ENCODE measurements at regions of chr1 and their contacts with region 1.

Region 1: DNA sequence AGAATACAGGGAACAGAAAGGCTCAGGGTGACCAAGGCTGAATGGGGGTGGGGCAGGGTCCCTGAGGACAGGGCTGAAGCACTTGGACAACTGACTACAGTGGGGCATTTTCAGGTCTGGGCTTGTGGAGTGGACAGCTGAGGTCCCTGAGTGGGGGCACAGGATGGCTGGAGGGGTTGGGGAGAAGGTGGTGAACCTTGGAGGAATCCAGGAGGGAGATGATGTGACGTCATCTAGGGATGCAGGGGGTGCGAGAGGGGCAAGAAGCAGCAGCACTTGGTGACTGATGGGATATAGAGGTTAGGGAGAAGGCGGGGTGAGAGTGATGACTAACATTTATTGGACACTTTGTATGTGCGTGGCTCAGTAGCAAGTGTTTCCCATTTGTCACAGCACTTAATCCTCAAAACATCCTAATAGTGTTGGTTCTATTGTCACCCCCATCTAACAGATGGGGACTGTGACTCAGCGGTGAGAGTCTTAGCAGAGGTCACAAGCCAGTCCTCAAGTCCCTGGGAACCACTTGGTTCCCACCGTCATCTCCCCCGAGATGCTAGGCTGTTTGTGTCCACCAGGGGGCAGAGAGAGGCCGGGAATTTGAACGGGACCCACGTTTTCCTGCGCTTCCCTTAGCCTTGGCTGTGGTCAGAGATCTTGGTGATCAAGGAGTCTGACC is 27.9 kb upstream of the BMP8B start:
- DNase-seq: peak; percentile 81
- ATAC-seq: peak; percentile 76
- H3K4me3 Mint-ChIP-seq: peak overlapping the region; percentile 9
- H3K27ac Mint-ChIP-seq: peak overlapping the region; percentile 49
- H3K4me1 Mint-ChIP-seq: peaks cover 13% of the 10 kb centered on the region
- H3K27me3 Mint-ChIP-seq: peaks cover 4% of the 10 kb centered on the region

Region 2: DNA sequence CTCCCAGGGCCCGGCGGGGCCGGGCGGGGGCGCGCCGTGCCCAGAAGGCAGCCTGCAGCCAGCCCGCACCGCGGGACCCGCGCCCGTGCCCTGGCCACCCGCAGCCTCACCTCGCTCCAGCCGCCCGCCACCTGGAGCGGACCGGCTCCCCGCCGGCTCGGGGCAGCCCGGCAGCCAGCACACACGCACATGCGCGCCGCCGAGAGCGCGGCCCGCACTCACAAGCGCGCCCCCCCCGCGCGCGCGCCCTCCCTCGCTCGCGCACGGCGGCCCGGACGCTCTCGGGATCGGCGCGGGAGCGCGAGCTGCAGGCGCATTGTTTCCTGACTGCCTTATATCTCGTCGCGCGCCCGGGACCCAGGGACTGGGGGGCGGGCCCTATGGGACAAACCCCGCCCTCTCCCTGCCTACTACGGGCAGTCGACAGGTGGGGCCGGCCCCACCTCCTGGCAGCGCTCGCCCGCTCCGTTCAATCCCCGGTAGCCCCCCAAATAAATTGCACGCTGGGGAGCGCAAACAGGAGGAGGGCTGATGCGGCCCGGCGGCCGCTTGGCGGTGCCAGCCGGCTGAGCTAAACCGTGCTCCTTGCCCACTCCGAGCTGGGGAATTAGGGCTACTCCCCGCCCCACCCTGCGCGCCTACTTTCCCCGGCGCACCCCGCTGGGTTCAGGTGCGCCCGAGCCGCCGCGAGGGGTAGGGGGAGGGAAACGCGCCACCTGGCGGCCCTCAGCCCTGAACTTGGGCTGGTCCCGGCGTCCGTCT is 85.3 kb after region 1 on chr1 and contains the start of gene MYCL:
- CTCF ChIA-PET with region 1: interaction called, 18 read pairs
- POLR2A ChIA-PET with region 1: no interaction called
- intact Hi-C with region 1: loop called (anchors 1 kb)
- DNase-seq: peak; percentile 86
- ATAC-seq: peak; percentile 92
- H3K4me3 Mint-ChIP-seq: peak within 1 kb of the TSS; percentile 66
- H3K27ac Mint-ChIP-seq: no peak within 1 kb of the TSS
- H3K4me1 Mint-ChIP-seq: peaks cover 2% of the 10 kb centered on the region
- H3K27me3 Mint-ChIP-seq: peaks cover 51% of the 10 kb centered on the region
- total RNA-seq, gene MYCL: 0.11 to 0.16 TPM

Region 3: GRCh38 chr1:40032240-40032891 is 215.8 kb after region 1 on chr1:
- CTCF ChIA-PET with region 1: interaction called, 4 read pairs
- POLR2A ChIA-PET with region 1: no interaction called
- intact Hi-C with region 1: loop called in 1 of 2 experiments (anchors 1 kb)
- DNase-seq: peak; percentile 65
- ATAC-seq: peak; percentile 66
- H3K4me3 Mint-ChIP-seq: no peak overlapping the region
- H3K27ac Mint-ChIP-seq: no peak overlapping the region
- H3K4me1 Mint-ChIP-seq: peaks cover 33% of the 10 kb centered on the region
- H3K27me3 Mint-ChIP-seq: no peaks in the 10 kb centered on the region

Region 4: GRCh38 chr1:40045182-40045581 is 228.6 kb after region 1 on chr1:
- CTCF ChIA-PET with region 1: no interaction called
- POLR2A ChIA-PET with region 1: no interaction called
- intact Hi-C with region 1: no loop called
- DNase-seq: no peak
- ATAC-seq: no peak
- H3K4me3 Mint-ChIP-seq: peak overlapping the region; percentile 50
- H3K27ac Mint-ChIP-seq: peak overlapping the region; percentile 83
- H3K4me1 Mint-ChIP-seq: peaks cover 78% of the 10 kb centered on the region
- H3K27me3 Mint-ChIP-seq: no peaks in the 10 kb centered on the region